ENCODE measurements at regions of chr11 and their contacts with region 1.

Region 1: DNA sequence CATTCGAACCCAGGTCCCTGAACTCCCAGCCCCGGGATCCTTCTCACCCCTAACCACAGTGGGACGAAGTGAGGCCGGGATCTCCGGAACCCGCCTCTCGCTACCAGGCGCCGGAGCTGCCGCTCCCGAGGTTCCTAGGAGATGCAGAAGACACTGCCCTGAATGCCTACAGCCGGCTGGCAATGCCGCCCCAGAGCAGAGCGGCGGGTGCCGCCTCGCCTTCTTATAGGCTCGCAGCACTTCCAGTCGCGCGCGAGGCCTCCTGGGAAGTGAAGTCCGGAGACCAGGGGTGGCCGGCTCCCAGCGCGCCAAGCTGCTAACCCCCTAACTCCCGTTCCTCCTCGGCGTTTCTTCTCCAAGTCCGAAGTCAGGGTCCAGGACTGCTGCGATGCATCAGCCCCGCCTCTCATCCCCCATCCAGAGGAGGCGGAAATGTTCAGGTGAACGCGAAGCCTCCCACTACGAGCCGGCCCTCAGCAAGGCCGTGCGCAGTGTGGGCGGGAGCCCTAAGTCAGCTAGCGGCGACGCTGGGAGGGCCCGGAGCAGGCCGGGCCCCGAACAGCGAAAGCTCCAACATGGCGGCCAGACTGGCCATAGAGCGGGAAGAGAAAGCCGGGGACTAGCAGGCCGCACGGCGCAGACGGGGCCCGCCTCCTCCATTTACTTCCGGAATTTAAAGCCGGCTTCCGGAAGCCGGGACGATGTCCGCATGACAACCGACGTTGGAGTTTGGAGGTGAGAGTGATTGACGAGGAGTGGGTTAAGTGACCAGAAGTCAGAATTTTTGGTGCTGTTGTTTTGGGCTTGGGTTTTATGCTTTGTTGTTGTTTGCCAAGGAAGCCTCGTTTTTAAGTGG is at the starts of genes CYB561A3 and TMEM138:
- DNase-seq: peak; percentile 95
- ATAC-seq: peak; percentile 96
- H3K4me3 Mint-ChIP-seq: peak within 1 kb of the TSS; percentile 100
- H3K27ac Mint-ChIP-seq: peak within 1 kb of the TSS; percentile 100
- H3K4me1 Mint-ChIP-seq: peaks cover 34% of the 10 kb centered on the region
- H3K27me3 Mint-ChIP-seq: no peaks in the 10 kb centered on the region
- total RNA-seq, gene CYB561A3: 31.8 to 34.4 TPM
- total RNA-seq, gene TMEM138: 38.6 to 56.5 TPM

Region 2: GRCh38 chr11:60469723-60470122 is 892.2 kb before region 1 on chr11:
- CTCF ChIA-PET with region 1: no interaction called
- POLR2A ChIA-PET with region 1: no interaction called
- intact Hi-C with region 1: no loop called
- DNase-seq: no peak
- ATAC-seq: no peak
- H3K4me3 Mint-ChIP-seq: no peak overlapping the region
- H3K27ac Mint-ChIP-seq: no peak overlapping the region
- H3K4me1 Mint-ChIP-seq: no peaks in the 10 kb centered on the region
- H3K27me3 Mint-ChIP-seq: peaks cover 14% of the 10 kb centered on the region

Region 3: GRCh38 chr11:60810569-60810968 is 551.3 kb before region 1 on chr11:
- CTCF ChIA-PET with region 1: no interaction called
- POLR2A ChIA-PET with region 1: no interaction called
- intact Hi-C with region 1: no loop called
- DNase-seq: no peak
- ATAC-seq: no peak
- H3K4me3 Mint-ChIP-seq: no peak overlapping the region
- H3K27ac Mint-ChIP-seq: no peak overlapping the region
- H3K4me1 Mint-ChIP-seq: no peaks in the 10 kb centered on the region
- H3K27me3 Mint-ChIP-seq: no peaks in the 10 kb centered on the region

Region 4: DNA sequence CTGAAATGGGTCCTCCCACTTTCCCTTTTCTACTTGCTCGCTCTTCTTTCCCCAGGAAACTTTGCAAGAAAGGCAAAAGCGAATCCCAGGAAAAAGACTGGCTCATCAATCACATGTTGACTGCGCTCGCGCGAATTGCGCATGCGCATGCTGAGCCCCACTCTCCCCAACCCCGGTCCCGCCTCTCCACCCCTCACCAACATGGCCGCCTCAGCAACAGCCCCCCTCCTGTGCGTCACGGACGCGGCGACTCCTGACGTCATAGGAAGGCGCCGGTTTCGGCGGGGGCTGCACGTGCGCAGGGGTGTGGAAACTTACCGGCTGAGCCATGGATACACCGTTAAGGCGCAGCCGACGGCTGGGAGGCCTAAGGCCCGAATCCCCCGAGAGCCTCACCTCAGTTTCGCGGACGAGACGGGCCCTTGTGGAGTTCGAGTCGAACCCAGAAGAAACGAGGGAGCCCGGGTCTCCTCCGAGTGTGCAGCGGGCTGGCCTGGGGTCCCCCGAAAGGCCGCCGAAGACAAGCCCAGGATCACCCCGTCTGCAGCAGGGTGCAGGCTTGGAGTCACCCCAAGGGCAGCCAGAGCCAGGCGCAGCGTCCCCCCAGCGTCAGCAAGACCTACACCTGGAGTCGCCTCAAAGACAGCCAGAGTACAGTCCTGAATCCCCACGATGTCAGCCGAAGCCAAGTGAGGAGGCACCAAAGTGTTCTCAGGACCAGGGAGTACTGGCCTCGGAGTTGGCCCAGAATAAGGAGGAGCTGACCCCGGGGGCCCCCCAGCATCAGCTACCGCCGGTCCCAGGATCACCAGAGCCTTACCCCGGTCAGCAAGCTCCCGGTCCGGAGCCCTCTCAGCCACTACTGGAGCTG is 519.9 kb before region 1 on chr11 and contains the start of gene CCDC86:
- CTCF ChIA-PET with region 1: no interaction called
- POLR2A ChIA-PET with region 1: no interaction called
- intact Hi-C with region 1: loop called in 1 of 2 experiments (anchors 1 kb)
- DNase-seq: peak; percentile 98
- ATAC-seq: peak; percentile 95
- H3K4me3 Mint-ChIP-seq: peak within 1 kb of the TSS; percentile 83
- H3K27ac Mint-ChIP-seq: peak within 1 kb of the TSS; percentile 96
- H3K4me1 Mint-ChIP-seq: peaks cover 38% of the 10 kb centered on the region
- H3K27me3 Mint-ChIP-seq: no peaks in the 10 kb centered on the region
- total RNA-seq, gene CCDC86: 52.1 to 75.1 TPM

Region 5: GRCh38 chr11:61187505-61188130 is 174.3 kb before region 1 on chr11:
- CTCF ChIA-PET with region 1: no interaction called
- POLR2A ChIA-PET with region 1: no interaction called
- intact Hi-C with region 1: no loop called
- DNase-seq: peak; percentile 89
- ATAC-seq: peak; percentile 92
- H3K4me3 Mint-ChIP-seq: no peak overlapping the region
- H3K27ac Mint-ChIP-seq: no peak overlapping the region
- H3K4me1 Mint-ChIP-seq: peaks cover 2% of the 10 kb centered on the region
- H3K27me3 Mint-ChIP-seq: peaks cover 3% of the 10 kb centered on the region

Region 6: DNA sequence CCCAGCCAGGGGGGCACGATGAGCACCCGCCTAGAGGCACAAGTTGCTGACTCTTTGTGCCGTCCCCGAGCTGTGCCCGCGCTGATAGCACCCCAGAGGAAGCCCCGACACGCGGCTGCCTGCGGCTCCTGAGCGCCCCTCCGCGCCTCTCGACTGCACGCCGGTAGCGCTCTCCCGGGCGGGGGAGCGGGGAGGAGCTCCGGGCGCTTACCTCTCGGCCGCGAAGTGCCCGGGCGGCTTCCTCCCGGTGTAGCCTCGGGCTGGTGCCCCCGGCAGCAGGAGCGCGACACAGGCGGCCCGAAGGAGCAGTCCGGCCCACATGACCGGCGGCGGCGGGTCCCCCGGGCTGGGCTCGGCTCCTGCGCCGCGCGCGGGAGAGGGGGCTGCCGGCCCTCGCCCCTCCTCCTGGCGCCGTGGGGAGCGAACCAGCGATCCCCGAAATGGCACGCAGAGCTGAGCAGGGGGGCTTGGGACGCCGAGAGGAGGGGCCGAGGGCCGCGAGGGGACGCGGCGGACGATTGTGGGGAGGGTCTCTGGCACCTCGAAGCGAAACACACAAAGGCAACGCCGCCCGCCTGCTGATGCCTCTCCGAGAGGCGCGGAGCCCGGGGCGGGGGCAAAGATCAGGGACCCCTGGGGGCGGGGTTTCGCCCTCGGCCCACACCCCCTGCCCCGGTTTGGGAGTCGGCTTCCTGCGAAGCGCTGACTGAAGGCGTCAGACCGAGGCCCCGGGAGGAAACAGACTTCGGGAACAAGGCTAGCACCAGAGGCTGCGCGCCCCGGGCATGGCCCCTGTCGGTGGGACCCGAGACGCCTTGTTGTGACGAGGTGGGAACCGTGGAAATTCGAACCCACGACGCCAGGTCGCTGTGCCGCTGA is 67.0 kb before region 1 on chr11 and contains the start of gene VWCE:
- CTCF ChIA-PET with region 1: interaction called, 3 read pairs
- POLR2A ChIA-PET with region 1: interaction called, 5 read pairs
- intact Hi-C with region 1: loop called in 1 of 2 experiments (anchors 1 kb)
- DNase-seq: peak; percentile 89
- ATAC-seq: peak; percentile 90
- H3K4me3 Mint-ChIP-seq: peak within 1 kb of the TSS; percentile 80
- H3K27ac Mint-ChIP-seq: peak within 1 kb of the TSS; percentile 72
- H3K4me1 Mint-ChIP-seq: peaks cover 33% of the 10 kb centered on the region
- H3K27me3 Mint-ChIP-seq: peaks cover 14% of the 10 kb centered on the region
- total RNA-seq, gene VWCE: 5.2 to 6.8 TPM

Region 7: DNA sequence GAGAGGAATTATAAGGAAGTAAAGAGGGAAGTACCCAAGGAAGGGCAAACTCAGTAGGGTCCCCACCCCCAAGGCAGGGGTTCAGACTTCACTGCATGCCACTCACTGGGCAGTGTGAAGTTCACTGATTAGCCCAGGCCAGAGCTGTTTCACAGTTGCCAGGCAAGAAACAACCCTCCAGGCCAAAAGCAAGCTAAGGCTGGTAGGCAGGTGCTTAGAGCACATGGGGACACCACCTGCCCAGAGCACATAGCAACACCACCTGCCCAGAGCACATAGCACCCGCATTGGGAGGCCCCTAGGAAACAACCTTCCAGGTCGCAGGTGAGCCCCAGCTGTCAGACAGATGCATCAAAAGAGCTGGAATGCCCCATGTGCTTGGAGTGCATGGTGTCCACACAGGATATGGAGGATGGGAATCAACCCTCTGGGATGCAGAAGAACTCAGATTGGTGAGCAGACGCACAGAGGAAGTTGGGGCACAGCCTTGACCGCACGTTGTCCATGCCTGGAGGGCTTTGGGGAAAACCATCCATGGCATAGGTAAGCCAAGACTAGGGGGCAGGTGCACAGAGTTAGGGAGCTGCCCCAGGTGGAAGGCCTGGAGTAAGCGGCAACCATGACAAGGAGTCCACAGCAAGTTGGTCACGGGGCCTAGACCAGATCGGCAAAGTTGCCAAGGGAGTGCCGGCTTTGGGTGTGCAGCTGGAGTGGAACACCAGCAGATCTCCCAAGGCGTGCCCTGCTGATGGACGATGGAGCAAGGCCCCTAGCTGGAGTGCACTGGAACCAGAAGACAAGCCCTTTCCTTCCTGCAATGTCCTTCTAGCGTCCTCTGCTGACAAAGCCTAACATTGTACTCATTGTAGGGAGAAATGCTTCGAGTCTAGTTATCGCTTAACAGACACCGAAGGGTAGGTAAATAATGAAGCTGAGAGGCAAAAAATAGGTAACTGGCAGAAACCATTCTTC is 22.6 kb after region 1 on chr11:
- CTCF ChIA-PET with region 1: interaction called, 66 read pairs
- POLR2A ChIA-PET with region 1: interaction called, 9 read pairs
- intact Hi-C with region 1: loop called in 1 of 2 experiments (anchors 1 kb)
- DNase-seq: no peak
- ATAC-seq: no peak
- H3K4me3 Mint-ChIP-seq: no peak overlapping the region
- H3K27ac Mint-ChIP-seq: no peak overlapping the region
- H3K4me1 Mint-ChIP-seq: peaks cover 3% of the 10 kb centered on the region
- H3K27me3 Mint-ChIP-seq: no peaks in the 10 kb centered on the region

Region 8: DNA sequence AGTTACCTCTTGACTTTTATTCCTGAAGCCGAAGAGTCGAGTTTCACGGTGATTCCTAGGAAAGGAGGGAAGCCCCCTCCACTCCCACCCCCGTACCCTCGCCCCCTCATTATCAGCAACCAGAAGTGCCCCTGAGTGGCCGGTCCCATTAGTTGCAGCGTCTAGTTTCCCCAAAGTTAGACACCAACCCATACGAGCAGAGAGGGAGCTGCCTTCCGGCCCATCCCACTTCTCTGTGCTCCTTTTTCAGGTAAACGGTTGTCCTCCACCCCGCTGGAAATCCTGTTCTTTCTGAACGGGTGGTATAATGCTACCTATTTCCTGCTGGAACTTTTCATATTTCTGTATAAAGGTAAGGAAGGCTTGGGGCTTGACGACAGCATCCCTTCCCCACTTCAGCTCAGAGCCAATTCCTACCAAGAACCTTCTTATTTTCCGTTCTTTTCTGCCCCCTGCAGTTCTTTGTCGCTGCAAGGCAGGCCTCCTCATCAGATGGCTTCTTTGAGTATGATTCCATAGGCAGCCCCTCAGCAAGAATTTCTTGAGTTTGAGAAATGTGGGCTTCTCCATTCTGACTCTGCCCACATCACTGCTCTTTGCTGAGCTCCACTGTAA is 31.2 kb after region 1 on chr11:
- CTCF ChIA-PET with region 1: interaction called, 20 read pairs
- POLR2A ChIA-PET with region 1: interaction called, 3 read pairs
- intact Hi-C with region 1: loop called (anchors 1 kb)
- DNase-seq: peak; percentile 35
- ATAC-seq: peak; percentile 50
- H3K4me3 Mint-ChIP-seq: peak overlapping the region; percentile 84
- H3K27ac Mint-ChIP-seq: peak overlapping the region; percentile 87
- H3K4me1 Mint-ChIP-seq: peaks cover 19% of the 10 kb centered on the region
- H3K27me3 Mint-ChIP-seq: no peaks in the 10 kb centered on the region

Region 9: DNA sequence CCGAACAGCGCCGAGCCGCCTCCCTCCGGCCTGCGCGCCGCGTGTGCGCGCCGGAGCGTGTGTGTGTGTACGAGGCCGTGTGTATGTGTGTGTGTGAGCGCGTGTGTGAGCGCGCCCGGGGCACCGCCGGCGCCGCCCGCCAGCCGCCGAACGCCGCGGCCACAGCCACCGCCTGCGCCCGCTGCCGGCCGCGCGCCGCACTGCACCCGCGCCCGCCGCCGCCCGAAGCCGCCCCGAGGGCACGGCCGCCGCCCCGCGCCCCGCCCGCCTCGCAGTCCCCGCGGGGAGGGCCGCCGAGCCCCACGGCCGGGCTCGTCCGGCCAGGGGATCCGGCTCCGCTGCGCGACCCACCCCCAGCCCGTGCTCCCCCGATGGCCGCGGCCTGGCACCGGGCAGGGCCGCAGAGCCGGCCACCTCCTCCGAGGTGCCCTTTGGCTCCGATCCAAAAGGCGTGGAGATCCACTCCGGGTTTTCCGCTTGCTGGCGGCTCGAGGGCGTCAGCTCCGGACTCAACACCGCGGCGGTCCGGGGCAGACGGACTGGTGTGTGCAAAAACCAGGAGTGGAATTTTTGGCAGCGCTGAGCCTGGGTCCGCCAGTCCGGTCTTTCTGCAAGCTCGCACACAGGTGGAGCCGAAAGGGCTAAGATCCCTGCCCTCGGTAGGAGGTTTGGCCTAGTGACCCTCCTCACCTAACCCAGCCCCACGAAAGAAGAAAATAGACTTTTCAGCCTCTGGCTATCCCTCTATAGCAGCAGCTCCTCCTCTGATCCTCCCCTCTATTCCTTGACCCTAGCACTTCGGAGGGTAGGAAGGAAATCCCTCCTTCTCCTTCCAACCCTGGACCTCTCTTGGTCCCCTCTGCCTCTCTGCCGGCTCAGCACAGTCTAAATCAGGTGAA is 219.4 kb after region 1 on chr11 and contains the start of gene SYT7:
- CTCF ChIA-PET with region 1: no interaction called
- POLR2A ChIA-PET with region 1: no interaction called
- intact Hi-C with region 1: loop called in 1 of 2 experiments (anchors 1 kb)
- DNase-seq: peak; percentile 97
- ATAC-seq: peak; percentile 91
- H3K4me3 Mint-ChIP-seq: peak within 1 kb of the TSS; percentile 64
- H3K27ac Mint-ChIP-seq: no peak within 1 kb of the TSS
- H3K4me1 Mint-ChIP-seq: peaks cover 12% of the 10 kb centered on the region
- H3K27me3 Mint-ChIP-seq: peaks cover 35% of the 10 kb centered on the region
- total RNA-seq, gene SYT7: 0.04 TPM in 1 of 2 experiments, not detected in the other

Measured in activated CD4-positive, alpha-beta T cell treated with anti-CD3 and anti-CD28 coated beads for 36 hours (primary cell).